ENCODE measurements at regions of chr3 and their contacts with region 1.

Region 1: DNA sequence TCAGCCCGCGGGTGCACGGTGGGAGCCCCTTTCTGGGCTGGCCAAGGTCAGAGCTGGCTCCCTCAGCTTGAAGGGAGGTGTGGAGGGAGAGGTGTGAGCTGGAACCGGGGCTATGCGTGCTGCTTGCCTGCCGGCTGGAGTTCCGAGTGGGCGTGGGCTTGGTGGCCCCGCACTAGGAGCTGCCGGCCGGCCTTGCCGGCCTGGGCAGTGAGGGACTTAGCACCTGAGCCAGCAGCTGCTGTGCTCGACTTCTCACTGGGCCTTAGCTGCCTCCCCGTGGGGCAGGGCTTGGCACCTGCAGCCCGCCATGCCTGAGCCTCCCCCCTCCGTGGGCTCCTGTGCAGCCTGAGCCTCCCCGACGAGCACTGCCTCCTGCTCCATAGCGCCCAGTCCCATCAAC is 36.0 kb downstream of the TRH start:
- DNase-seq: no peak
- ATAC-seq: no peak
- H3K4me3 ChIP-seq: no peak overlapping the region
- H3K4me3 Mint-ChIP-seq: no peak overlapping the region
- H3K27ac ChIP-seq: no peak overlapping the region
- H3K27ac Mint-ChIP-seq: no peak overlapping the region
- H3K4me1 ChIP-seq: no peaks in the 10 kb centered on the region
- H3K4me1 Mint-ChIP-seq: no peaks in the 10 kb centered on the region
- H3K27me3 ChIP-seq: peaks cover 0 to 14% of the 10 kb centered on the region in 2 experiments
- H3K27me3 Mint-ChIP-seq: peaks cover 9 to 26% of the 10 kb centered on the region in 2 donors

Region 2: GRCh38 chr3:129708328-129708861 is 302.2 kb before region 1 on chr3:
- CTCF ChIA-PET with region 1: interaction called in 1 of 2 experiments, 12 read pairs
- POLR2A ChIA-PET with region 1: no interaction called
- DNase-seq: no peak
- ATAC-seq: no peak
- H3K4me3 ChIP-seq: no peak overlapping the region
- H3K4me3 Mint-ChIP-seq: no peak overlapping the region
- H3K27ac ChIP-seq: no peak overlapping the region
- H3K27ac Mint-ChIP-seq: no peak overlapping the region
- H3K4me1 ChIP-seq: no peaks in the 10 kb centered on the region
- H3K4me1 Mint-ChIP-seq: peaks cover 0 to 8% (median 4%) of the 10 kb centered on the region in 3 donors
- H3K27me3 ChIP-seq: no peaks in the 10 kb centered on the region
- H3K27me3 Mint-ChIP-seq: no peaks in the 10 kb centered on the region

Region 3: GRCh38 chr3:129984125-129984524 is 26.4 kb before region 1 on chr3:
- CTCF ChIA-PET with region 1: no interaction called
- POLR2A ChIA-PET with region 1: no interaction called
- DNase-seq: no peak
- ATAC-seq: no peak
- H3K4me3 ChIP-seq: no peak overlapping the region
- H3K4me3 Mint-ChIP-seq: no peak overlapping the region
- H3K27ac ChIP-seq: no peak overlapping the region
- H3K27ac Mint-ChIP-seq: no peak overlapping the region
- H3K4me1 ChIP-seq: no peaks in the 10 kb centered on the region
- H3K4me1 Mint-ChIP-seq: no peaks in the 10 kb centered on the region
- H3K27me3 ChIP-seq: peaks cover 0 to 5% of the 10 kb centered on the region in 2 experiments
- H3K27me3 Mint-ChIP-seq: no peaks in the 10 kb centered on the region